ENCODE measurements at regions of chr1 and their contacts with region 1.

Region 1: GRCh38 chr1:27686223-27687018 is 14.4 kb upstream of the IFI6 start:
- DNase-seq: peak; percentile 76 to 91
- H3K4me3 ChIP-seq: no peak overlapping the region
- H3K27ac ChIP-seq: no peak overlapping the region
- H3K4me1 ChIP-seq: peaks cover 14% of the 10 kb centered on the region; the same call in 1 of the 2 replicates
- H3K27me3 ChIP-seq: no peaks in the 10 kb centered on the region
- CTCF ChIP-seq: no peak

Region 2: DNA sequence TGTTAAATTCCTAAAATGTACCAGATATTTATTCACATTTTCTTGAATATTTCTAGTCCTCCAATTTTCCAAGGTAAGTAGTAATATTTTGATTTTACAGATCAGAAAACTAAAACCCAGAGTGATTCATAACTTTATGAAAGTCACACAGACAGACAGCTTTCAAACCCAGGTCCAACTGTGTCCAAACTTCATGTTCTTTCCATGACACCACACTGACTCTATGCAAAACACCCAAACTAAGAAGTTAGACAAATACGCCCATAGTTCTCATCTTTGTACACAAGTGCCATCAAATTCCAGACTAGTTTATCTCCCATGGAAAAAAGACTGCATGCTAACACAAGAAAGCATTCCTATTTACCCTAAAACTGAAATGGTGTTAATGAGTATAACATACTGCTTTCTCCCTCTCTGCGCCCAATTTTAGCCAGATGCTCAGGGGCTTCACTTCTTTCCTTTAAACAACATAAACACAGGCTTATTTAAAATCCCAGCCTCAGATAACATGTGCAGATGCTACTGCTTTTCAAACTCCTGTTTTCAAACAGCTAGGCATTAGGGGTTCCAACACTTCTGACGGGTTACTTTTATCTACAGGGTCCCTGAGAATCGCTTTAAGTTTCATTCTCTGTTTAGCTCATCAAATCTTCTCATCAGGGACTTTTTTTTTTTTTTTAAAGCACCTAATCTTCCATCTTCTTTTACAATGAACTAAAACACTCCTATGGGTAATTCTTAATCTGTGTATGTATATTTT is 241.1 kb before region 1 on chr1:
- CTCF ChIA-PET with region 1: no interaction called
- POLR2A ChIA-PET with region 1: interaction called, 10 read pairs
- intact Hi-C with region 1: no loop called
- DNase-seq: no peak
- H3K4me3 ChIP-seq: no peak overlapping the region
- H3K27ac ChIP-seq: no peak overlapping the region
- H3K4me1 ChIP-seq: no peaks in the 10 kb centered on the region
- H3K27me3 ChIP-seq: no peaks in the 10 kb centered on the region
- CTCF ChIP-seq: no peak

Region 3: DNA sequence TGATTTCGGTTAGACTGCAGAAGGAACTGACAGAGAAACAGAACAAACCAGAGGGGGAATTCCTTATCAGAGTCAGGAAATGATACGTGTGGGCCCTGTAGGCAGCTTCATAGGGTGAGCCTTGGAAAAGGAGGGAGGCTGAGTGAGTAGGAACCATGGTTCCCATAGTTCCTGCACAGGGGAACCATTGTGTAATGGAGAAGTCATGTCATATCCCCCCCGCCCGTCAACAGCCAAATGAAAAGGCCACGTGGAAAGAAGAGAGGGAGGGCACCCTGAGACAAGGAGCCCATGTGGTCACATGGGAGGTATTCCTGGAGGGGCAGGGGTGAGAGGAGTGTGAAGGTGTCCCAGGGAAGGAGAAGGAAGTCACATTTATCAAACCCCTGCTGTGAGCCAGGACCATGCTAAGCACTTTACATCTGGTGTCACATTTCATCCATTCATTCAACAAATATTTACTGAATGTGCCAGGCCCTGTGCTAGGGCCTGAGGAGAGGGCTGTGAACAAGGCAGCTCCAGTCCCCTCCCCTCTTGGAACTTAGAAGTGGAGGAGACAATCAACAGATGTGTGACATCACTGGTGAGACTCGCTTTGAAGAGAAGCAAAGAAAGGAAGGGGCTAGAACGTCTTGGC is 35.8 kb before region 1 on chr1:
- CTCF ChIA-PET with region 1: no interaction called
- POLR2A ChIA-PET with region 1: no interaction called
- intact Hi-C with region 1: no loop called
- DNase-seq: peak; percentile 64 to 73
- H3K4me3 ChIP-seq: no peak overlapping the region
- H3K27ac ChIP-seq: no peak overlapping the region
- H3K4me1 ChIP-seq: peaks cover 14% of the 10 kb centered on the region
- H3K27me3 ChIP-seq: no peaks in the 10 kb centered on the region
- CTCF ChIP-seq: no peak

Region 4: DNA sequence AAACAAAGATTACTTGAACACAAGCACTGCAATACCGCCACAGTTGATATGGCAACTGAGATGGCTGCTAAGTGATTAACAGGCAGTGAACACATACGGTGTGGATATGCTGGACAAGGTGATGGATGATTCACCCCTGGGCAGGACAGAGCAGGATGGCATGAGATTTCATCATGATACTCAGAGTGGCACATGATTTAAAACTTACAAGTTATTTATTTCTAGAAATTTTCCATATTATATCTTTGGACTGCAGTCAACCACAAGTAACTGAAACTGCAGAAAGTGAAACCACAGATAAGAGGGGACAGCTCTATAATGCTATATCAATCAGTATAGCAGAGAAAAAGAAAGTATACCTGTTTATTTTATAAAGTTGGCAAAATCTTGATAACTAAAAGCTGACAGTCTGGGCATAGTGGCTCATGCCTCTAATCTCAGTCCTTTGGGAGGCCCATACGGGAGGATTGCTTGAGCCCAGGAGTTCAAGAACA is 731.1 kb after region 1 on chr1:
- CTCF ChIA-PET with region 1: no interaction called
- POLR2A ChIA-PET with region 1: no interaction called
- intact Hi-C with region 1: no loop called
- DNase-seq: peak; percentile 58 to 85
- H3K4me3 ChIP-seq: no peak overlapping the region
- H3K27ac ChIP-seq: peak overlapping the region; percentile 100
- H3K4me1 ChIP-seq: peaks cover 21% of the 10 kb centered on the region
- H3K27me3 ChIP-seq: no peaks in the 10 kb centered on the region
- CTCF ChIP-seq: no peak